ENCODE measurements at regions of chr1 and their contacts with region 1.

Region 1: GRCh38 chr1:180515864-180516388 is 13.5 kb upstream of the ACBD6 start:
- DNase-seq: peak; percentile 74
- H3K27ac ChIP-seq: no peak overlapping the region
- CTCF ChIP-seq: peak; percentile 84

Region 2: DNA sequence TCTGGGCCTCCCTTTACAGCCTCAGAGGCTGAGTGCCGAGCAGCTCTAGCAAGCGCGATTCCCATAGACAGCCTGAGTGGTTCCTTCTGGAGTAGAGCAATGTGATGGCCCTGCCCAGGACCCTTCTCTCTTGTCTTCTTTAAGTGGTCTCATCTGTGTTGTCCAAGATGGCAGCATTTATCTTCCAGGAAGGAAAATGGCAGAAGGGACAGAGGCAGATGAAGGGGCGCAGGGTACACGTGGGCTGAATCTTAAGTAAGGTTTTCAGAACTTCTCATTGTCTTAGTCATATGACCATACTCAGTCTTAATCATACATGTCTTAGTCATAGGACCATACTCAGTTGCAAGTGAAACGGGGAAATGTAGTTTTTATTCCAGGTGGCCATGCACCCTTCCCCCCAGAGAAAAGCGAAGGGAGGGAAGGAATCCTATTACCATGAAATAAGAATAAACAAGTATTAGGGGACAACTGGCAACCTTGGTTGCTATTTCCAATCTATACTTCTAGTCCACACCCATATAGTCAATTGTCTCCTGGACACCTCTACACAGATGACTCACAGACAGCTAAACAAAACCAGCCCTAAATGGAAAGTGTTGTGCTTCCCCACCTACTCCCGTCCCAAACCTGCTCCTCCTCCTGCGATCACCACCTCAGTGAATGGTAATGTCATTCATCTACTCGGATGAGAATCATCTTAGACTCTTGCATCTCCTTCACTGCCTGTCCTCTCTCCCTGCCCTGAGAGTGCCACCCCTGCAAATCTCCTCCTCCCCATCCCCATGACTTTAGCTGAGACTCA is 56.1 kb after region 1 on chr1:
- CTCF ChIA-PET with region 1: no interaction called
- POLR2A ChIA-PET with region 1: no interaction called
- DNase-seq: peak; percentile 45
- H3K27ac ChIP-seq: no peak overlapping the region
- CTCF ChIP-seq: no peak

Region 3: DNA sequence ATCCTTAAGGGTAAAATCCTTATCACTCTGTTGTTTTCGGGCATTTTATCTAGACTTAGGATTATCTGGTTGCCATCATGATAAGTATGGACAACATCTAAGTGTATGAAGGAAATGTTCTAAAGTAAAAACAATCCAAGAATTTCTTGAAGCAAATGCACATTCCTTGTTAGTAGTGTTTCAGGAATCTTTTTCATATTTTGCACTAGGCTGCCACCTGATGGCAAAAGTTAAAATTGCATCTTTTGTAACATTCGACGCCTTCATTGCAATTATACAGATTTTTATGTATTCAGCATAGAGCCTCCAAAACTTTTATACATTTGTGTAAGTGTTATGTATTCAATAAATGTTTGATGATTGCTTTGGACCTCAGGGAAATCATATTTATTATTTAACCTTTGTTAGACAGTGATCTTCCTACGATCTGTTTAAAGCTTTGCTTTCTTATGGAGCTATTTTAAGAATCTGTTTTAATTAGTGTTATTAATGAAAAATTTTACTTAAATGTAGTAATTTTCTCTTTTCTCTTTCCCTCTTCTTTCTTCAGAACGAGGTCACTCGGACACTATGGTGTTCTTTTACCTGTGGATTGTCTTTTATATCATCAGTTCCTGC is 347.3 kb after region 1 on chr1:
- CTCF ChIA-PET with region 1: interaction called, 40 read pairs
- POLR2A ChIA-PET with region 1: interaction called, 10 read pairs
- DNase-seq: peak; percentile 40
- H3K27ac ChIP-seq: no peak overlapping the region
- CTCF ChIP-seq: peak; percentile 71